ENCODE measurements at regions of chr7 and their contacts with region 1.

Region 1: GRCh38 chr7:151782598-151783448 is 94.1 kb downstream of the PRKAG2 start:
- H3K4me3 ChIP-seq: peak overlapping the region; percentile 24
- H3K27ac ChIP-seq: no peak overlapping the region
- H3K4me1 ChIP-seq: no peaks in the 10 kb centered on the region
- CTCF ChIP-seq: peak; percentile 99

Region 2: GRCh38 chr7:151769188-151769841 is 13.5 kb before region 1 on chr7:
- CTCF ChIA-PET with region 1: interaction called, 26 read pairs
- POLR2A ChIA-PET with region 1: no interaction called
- H3K4me3 ChIP-seq: no peak overlapping the region
- H3K27ac ChIP-seq: no peak overlapping the region
- H3K4me1 ChIP-seq: no peaks in the 10 kb centered on the region
- CTCF ChIP-seq: no peak

Region 3: DNA sequence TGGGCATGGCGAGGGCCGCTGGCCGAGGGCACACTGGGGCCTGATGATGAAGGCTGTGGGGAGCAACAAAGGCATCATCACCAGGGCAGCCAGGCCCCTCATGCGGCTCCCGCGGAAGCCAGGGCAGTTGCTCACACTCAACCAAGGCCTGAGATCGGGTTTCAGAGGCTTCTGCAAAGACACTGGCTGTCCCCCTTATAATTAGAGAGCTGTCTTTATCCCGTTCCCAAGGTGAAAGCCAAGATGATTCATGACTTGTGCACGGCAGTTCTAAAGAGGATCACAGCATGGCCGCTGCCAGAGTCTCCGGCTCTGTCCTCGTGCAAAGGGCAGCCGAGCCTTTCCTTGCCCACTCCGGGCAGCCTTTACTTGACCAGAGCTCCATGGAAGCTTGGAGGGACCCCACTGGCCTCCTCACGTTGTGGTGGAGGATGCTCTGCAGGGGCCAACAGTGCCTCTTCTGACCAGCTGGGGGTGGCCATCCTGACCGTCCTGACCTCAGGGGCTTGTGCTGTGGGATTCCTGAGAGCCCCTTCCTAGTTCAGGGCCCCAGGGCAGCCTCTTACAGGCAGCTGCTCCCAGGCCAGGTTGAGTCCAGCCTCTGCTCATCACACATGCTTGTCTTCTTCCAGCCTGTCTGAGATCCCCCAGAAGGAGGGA is 11.8 kb after region 1 on chr7:
- CTCF ChIA-PET with region 1: interaction called, 37 read pairs
- POLR2A ChIA-PET with region 1: no interaction called
- H3K4me3 ChIP-seq: no peak overlapping the region
- H3K27ac ChIP-seq: no peak overlapping the region
- H3K4me1 ChIP-seq: no peaks in the 10 kb centered on the region
- CTCF ChIP-seq: no peak

Region 4: DNA sequence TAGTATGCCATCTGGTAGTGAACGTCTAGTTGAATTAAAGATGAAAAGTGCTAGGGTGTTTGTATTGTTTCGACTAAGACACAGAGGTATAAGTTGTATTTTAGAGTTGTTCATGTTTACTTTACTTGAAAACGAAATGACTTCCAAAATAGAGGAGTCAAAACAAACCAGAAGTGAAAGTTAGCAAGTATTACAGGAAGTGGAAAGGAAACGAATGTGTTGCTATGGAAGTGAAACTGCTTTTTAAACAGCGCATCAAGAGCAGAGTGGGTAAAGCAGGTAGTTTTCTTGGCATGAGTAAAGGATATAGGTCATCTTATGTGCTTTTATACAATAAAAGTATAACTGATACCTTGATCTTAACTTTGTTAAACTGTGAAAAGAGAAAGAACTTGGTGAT is 153.4 kb after region 1 on chr7:
- CTCF ChIA-PET with region 1: interaction called, 31 read pairs
- POLR2A ChIA-PET with region 1: no interaction called
- H3K4me3 ChIP-seq: no peak overlapping the region
- H3K27ac ChIP-seq: no peak overlapping the region
- H3K4me1 ChIP-seq: no peaks in the 10 kb centered on the region
- CTCF ChIP-seq: no peak

Measured in HEK293 (cell line).